ENCODE measurements at regions of chr1 and their contacts with region 1.

Region 1: GRCh38 chr1:25890239-25891034 is 14.9 kb upstream of the PAQR7 start:
- DNase-seq: peak; percentile 50
- ATAC-seq: peak; percentile 47
- H3K4me3 ChIP-seq: no peak overlapping the region
- H3K27ac ChIP-seq: no peak overlapping the region
- H3K4me1 ChIP-seq: peaks cover 50% of the 10 kb centered on the region
- H3K27me3 ChIP-seq: no peaks in the 10 kb centered on the region
- CTCF ChIP-seq: no peak
- EP300 ChIP-seq: no peak
- POLR2A ChIP-seq: no peak
- RAD21 ChIP-seq: no peak

Region 2: GRCh38 chr1:25819576-25820246 is 70.7 kb before region 1 on chr1 and contains the start of gene MTFR1L:
- CTCF ChIA-PET with region 1: no interaction called
- POLR2A ChIA-PET with region 1: no interaction called
- in situ Hi-C with region 1: no loop called
- intact Hi-C with region 1: loop called (anchors 5 kb)
- DNase-seq: peak; percentile 83
- ATAC-seq: peak; percentile 89
- H3K4me3 ChIP-seq: peak within 1 kb of the TSS; percentile 90 to 94 (median 94)
- H3K27ac ChIP-seq: peak within 1 kb of the TSS; percentile 98
- H3K4me1 ChIP-seq: peaks cover 33% of the 10 kb centered on the region
- H3K27me3 ChIP-seq: no peaks in the 10 kb centered on the region; a peak in 1 of 5 replicates
- CTCF ChIP-seq: no peak
- EP300 ChIP-seq: no peak
- POLR2A ChIP-seq: peak; percentile 79 to 92
- RAD21 ChIP-seq: peak; percentile 27; the same call in 1 of the 2 replicates
- total RNA-seq, gene MTFR1L: 38.0 and 47.5 TPM in 2 replicates

Region 3: DNA sequence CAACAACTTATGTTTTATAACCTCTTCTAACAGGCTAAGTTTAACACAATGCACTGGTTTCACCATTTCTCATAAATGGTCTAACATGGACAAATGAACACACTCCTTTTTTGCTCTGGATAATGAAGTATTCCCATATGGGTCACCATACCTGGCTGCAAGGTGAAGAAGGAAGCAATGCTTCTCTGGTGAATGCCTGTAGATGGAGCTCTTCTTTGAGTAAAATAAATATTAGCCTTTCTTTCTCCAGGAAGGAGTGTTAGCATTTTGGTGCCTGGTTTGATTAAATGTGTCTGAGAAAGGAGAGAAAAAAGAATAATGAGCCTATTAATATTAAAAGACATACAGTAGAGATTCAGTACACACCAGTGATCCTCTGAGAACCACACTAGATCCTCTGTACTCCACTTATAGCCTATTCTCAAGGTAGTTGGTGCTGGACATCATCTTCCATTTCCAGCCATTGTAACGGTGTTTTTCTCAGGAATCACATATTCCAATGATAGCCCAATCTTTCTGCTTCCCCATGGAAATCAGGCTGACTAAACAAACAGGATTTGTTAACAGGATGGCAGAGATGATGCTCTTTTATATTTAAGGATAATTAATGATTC is 53.1 kb before region 1 on chr1:
- CTCF ChIA-PET with region 1: interaction called, 4 read pairs
- POLR2A ChIA-PET with region 1: no interaction called
- in situ Hi-C with region 1: loop called (anchors 5 kb)
- intact Hi-C with region 1: loop called (anchors 1 kb)
- DNase-seq: peak; percentile 41
- ATAC-seq: peak; percentile 59; the same call in 1 of the 3 replicates
- H3K4me3 ChIP-seq: no peak overlapping the region
- H3K27ac ChIP-seq: no peak overlapping the region
- H3K4me1 ChIP-seq: peaks cover 7% of the 10 kb centered on the region; the same call in 1 of the 2 replicates
- H3K27me3 ChIP-seq: no peaks in the 10 kb centered on the region
- CTCF ChIP-seq: peak; percentile 64
- EP300 ChIP-seq: no peak
- POLR2A ChIP-seq: no peak
- RAD21 ChIP-seq: no peak

Region 4: GRCh38 chr1:25848531-25848930 is 41.9 kb before region 1 on chr1:
- CTCF ChIA-PET with region 1: no interaction called
- POLR2A ChIA-PET with region 1: no interaction called
- in situ Hi-C with region 1: no loop called
- intact Hi-C with region 1: no loop called
- DNase-seq: no peak
- ATAC-seq: no peak
- H3K4me3 ChIP-seq: no peak overlapping the region
- H3K27ac ChIP-seq: no peak overlapping the region
- H3K4me1 ChIP-seq: no peaks in the 10 kb centered on the region
- H3K27me3 ChIP-seq: no peaks in the 10 kb centered on the region
- CTCF ChIP-seq: no peak
- EP300 ChIP-seq: no peak
- POLR2A ChIP-seq: no peak
- RAD21 ChIP-seq: no peak

Region 5: GRCh38 chr1:25874934-25875855 is 15.2 kb before region 1 on chr1 and contains the start of gene PAQR7:
- CTCF ChIA-PET with region 1: no interaction called
- POLR2A ChIA-PET with region 1: interaction called, 7 read pairs
- in situ Hi-C with region 1: no loop called
- intact Hi-C with region 1: loop called (anchors 2 kb)
- DNase-seq: peak; percentile 67
- ATAC-seq: peak; percentile 80
- H3K4me3 ChIP-seq: peak within 1 kb of the TSS; percentile 69 to 95 (median 70)
- H3K27ac ChIP-seq: peak within 1 kb of the TSS; percentile 79
- H3K4me1 ChIP-seq: peaks cover 71% of the 10 kb centered on the region
- H3K27me3 ChIP-seq: no peaks in the 10 kb centered on the region; a peak in 1 of 5 replicates
- CTCF ChIP-seq: peak; percentile 57
- EP300 ChIP-seq: 0 out of 4 replicates have a peak, but pooled peaks of 1 of the 2 experiments have one; percentile 10
- POLR2A ChIP-seq: peak in 1 of 2 experiments; percentile 60; a peak in 3 of 4 replicates
- RAD21 ChIP-seq: no peak; the same call in none of the 2 replicates
- total RNA-seq, gene PAQR7: 6.0 and 13.2 TPM in 2 replicates

Region 6: DNA sequence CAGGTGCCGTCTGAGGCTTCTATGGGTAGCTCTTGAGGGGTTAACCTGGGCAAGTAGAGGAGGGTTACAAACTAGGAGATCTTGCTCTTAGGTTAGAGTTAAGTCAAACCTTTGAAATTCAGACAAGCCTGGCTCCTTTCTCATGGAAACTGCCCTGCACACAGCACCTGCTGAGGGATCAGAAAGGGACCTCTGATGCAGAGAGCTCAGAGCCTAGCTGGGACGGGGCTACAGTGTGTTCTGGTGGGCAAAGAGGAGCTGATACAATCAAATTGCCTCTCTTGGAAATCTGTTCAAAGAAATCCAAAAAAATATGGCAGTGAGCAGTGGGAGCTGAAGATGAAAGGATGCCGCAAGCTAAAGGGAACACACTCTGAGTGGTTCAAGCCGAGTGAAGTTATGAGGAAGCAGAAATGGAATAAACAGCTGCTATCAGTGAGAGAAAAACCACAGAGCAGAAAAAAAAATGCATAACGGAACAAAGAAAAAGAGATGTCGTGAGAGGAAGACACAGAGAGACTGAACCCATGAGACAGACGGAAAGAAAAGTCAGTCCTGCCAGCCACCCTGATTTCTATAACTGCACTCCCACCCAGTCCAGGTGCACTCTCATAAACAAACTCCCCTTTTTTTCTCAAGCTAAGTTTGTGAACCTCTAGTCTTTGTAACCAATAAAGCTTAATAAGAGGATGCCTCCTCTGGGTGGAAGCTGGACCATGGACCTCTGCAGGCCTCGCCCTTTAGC is 80.8 kb after region 1 on chr1:
- CTCF ChIA-PET with region 1: no interaction called
- POLR2A ChIA-PET with region 1: no interaction called
- in situ Hi-C with region 1: no loop called
- intact Hi-C with region 1: no loop called
- DNase-seq: no peak
- ATAC-seq: no peak
- H3K4me3 ChIP-seq: no peak overlapping the region
- H3K27ac ChIP-seq: no peak overlapping the region
- H3K4me1 ChIP-seq: no peaks in the 10 kb centered on the region
- H3K27me3 ChIP-seq: no peaks in the 10 kb centered on the region
- CTCF ChIP-seq: no peak
- EP300 ChIP-seq: no peak
- POLR2A ChIP-seq: no peak
- RAD21 ChIP-seq: no peak